ENCODE measurements at regions of chr16 and their contacts with region 1.

Region 1: DNA sequence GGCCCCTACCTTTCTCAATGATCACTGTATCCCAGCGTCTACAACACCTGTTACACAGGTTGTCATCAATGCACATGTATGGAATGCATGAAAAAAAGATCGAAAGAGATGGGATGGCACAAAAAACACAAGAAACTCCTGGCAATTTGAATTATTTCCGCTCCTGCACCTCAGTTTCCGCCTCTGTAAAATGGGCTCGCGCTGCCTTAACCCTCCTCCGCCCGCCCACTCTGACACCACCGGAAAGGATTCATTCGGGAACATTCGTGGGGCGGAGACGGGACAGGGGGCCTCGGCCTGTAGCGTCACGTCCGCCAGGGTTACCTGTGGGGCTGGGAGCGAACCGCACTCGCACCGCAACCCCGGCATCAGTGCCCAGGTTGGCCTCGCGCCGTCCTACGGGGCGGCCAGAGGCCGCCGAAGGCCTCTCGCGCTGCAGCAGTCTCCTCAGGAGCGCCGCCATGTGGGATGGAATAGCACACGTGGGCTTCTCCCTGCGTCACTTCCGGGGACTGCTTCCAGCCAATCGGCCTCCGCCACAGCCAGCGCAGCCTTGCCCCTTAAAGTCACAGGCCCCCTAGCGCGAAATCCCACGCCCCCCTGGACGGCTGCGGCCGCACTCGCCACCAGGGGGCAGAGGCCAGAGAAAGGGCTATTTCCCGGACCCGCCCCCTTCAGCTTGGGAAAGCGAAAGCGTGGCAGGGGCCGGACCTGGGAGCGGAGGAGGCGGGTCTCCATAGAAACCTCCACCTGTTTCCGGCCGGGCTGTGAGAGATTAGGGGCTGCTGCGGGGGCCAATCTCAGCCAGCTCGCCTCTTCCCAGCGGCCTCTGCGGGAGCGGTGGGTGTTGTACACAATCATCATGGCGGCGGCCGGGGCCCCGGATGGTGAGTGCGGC is at the starts of genes EARS2 and UBFD1:
- DNase-seq: peak; percentile 100
- H3K4me3 ChIP-seq: peak within 1 kb of the TSS; percentile 74 to 92 (median 86)
- H3K27ac ChIP-seq: peak within 1 kb of the TSS; percentile 74
- H3K4me1 ChIP-seq: peaks cover 12% of the 10 kb centered on the region
- H3K27me3 ChIP-seq: no peaks in the 10 kb centered on the region
- CTCF ChIP-seq: peak; percentile 98 to 100
- POLR2A ChIP-seq: peak; percentile 71
- total RNA-seq, gene EARS2: 10.9 and 14.7 TPM in 2 replicates
- total RNA-seq, gene UBFD1: 64.8 and 69.9 TPM in 2 replicates

Region 2: DNA sequence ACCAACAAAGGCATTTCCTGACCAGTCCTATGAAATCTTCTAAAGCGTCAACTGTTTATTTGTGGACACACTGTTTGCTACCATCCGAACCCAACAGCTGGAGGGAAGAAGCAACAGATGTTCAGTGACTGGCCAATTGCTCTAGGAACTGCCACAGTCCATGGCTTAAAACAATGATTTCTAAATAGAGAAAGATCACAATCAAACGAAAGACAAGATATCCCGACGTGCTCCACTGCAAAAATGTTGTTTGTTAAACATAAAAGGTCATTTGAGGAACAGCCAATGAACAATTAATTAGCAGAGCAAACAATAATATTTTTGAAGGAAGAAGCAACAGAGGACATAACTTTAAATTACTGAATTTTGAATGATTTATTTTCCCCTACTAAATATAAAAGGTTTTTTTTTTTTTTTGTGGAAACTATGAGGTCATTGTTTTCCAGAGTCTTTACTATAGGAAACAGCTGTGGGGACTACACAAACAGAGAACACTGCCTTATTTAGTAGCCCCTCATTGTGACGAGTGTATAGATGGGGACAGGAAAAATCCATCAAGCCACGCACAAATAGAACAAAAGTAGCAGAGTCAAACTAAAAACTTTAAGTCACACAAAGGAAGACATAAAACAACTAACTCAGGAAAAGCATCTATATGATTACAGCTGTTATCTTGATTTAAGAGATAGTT is 425.1 kb before region 1 on chr16:
- CTCF ChIA-PET with region 1: no interaction called
- POLR2A ChIA-PET with region 1: no interaction called
- dilution Hi-C with region 1: no loop called
- intact Hi-C with region 1: loop called (anchors 1 kb)
- DNase-seq: peak; percentile 96
- H3K4me3 ChIP-seq: peak overlapping the region in 1 of 3 experiments; percentile 43
- H3K27ac ChIP-seq: peak overlapping the region; percentile 97
- H3K4me1 ChIP-seq: peaks cover 45% of the 10 kb centered on the region
- H3K27me3 ChIP-seq: no peaks in the 10 kb centered on the region
- CTCF ChIP-seq: no peak
- POLR2A ChIP-seq: peak; percentile 31

Region 3: DNA sequence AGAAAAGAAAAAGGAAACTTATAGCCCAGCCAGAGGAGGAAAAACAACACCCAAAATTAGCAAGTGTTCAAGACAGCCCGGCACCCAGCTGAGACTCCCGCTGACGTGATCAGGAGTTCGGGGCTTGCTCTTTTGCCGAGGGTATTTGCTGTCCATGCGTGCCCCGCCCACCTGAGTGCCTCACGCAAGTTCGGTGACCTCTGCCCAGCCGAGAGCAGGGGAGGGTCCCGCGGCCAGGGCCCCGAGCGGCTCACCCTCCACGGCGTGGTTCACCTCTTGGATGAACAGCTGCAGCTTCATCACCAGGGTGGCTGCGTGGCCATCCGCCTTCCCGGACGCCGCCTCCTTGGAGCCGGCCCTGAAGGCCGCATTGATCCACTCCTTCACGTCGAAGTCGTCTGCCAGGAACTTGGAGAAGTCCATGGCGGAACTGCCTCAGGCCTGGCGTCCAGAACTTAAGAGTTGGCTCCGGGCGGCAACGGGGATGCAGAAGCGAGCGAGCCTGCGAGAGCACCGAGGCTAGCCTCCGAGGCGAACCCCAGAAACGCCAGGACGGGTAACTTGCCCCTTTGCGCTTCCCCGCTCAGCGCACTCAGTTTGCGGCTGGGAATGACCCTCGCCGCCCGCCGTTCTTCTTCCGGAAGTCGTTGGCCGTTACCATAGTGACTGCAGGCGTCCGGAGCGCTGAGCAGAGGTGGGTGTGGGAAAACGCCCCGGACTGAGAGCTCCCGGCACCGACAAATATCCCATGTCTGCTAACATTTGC is 104.4 kb before region 1 on chr16 and contains the start of gene COG7:
- CTCF ChIA-PET with region 1: no interaction called
- POLR2A ChIA-PET with region 1: no interaction called
- dilution Hi-C with region 1: no loop called
- intact Hi-C with region 1: loop called (anchors 1 kb)
- DNase-seq: peak; percentile 95
- H3K4me3 ChIP-seq: peak within 1 kb of the TSS; percentile 65 to 79 (median 70)
- H3K27ac ChIP-seq: peak within 1 kb of the TSS; percentile 37
- H3K4me1 ChIP-seq: peaks cover 3% of the 10 kb centered on the region
- H3K27me3 ChIP-seq: no peaks in the 10 kb centered on the region
- CTCF ChIP-seq: no peak
- POLR2A ChIP-seq: peak; percentile 22
- total RNA-seq, gene COG7: 20.7 and 24.1 TPM in 2 replicates

Region 4: GRCh38 chr16:23504451-23505179 is 52.5 kb before region 1 on chr16:
- CTCF ChIA-PET with region 1: interaction called, 5 read pairs
- POLR2A ChIA-PET with region 1: no interaction called
- dilution Hi-C with region 1: no loop called
- intact Hi-C with region 1: loop called (anchors 2 kb)
- DNase-seq: peak; percentile 87
- H3K4me3 ChIP-seq: no peak overlapping the region
- H3K27ac ChIP-seq: peak overlapping the region; percentile 64
- H3K4me1 ChIP-seq: peaks cover 20% of the 10 kb centered on the region
- H3K27me3 ChIP-seq: no peaks in the 10 kb centered on the region
- CTCF ChIP-seq: no peak
- POLR2A ChIP-seq: no peak

Region 5: GRCh38 chr16:23595951-23596720 is 39.0 kb after region 1 on chr16 and contains the start of gene NDUFAB1:
- CTCF ChIA-PET with region 1: interaction called, 11 read pairs
- POLR2A ChIA-PET with region 1: no interaction called
- dilution Hi-C with region 1: no loop called
- intact Hi-C with region 1: loop called (anchors 1 kb)
- DNase-seq: peak; percentile 90
- H3K4me3 ChIP-seq: peak within 1 kb of the TSS; percentile 77 to 89 (median 87)
- H3K27ac ChIP-seq: peak within 1 kb of the TSS; percentile 59
- H3K4me1 ChIP-seq: peaks cover 7% of the 10 kb centered on the region
- H3K27me3 ChIP-seq: no peaks in the 10 kb centered on the region
- CTCF ChIP-seq: peak; percentile 91 to 99
- POLR2A ChIP-seq: peak; percentile 83
- total RNA-seq, gene NDUFAB1: 109 and 112 TPM in 2 replicates

Region 6: GRCh38 chr16:23640931-23641765 is 84.0 kb after region 1 on chr16 and contains the starts of genes DCTN5 and PALB2:
- CTCF ChIA-PET with region 1: interaction called, 5 read pairs
- POLR2A ChIA-PET with region 1: no interaction called
- dilution Hi-C with region 1: no loop called
- intact Hi-C with region 1: loop called (anchors 1 kb)
- DNase-seq: peak; percentile 94
- H3K4me3 ChIP-seq: peak within 1 kb of the TSS; percentile 68 to 99 (median 99)
- H3K27ac ChIP-seq: peak within 1 kb of the TSS; percentile 96
- H3K4me1 ChIP-seq: peaks cover 15% of the 10 kb centered on the region
- H3K27me3 ChIP-seq: no peaks in the 10 kb centered on the region
- CTCF ChIP-seq: no peak
- POLR2A ChIP-seq: peak; percentile 93
- total RNA-seq, gene DCTN5: 80.8 and 83.5 TPM in 2 replicates
- total RNA-seq, gene PALB2: 11.8 and 15.6 TPM in 2 replicates

Region 7: GRCh38 chr16:23663918-23664317 is 106.8 kb after region 1 on chr16:
- CTCF ChIA-PET with region 1: no interaction called
- POLR2A ChIA-PET with region 1: no interaction called
- dilution Hi-C with region 1: no loop called
- intact Hi-C with region 1: no loop called
- DNase-seq: no peak
- H3K4me3 ChIP-seq: no peak overlapping the region
- H3K27ac ChIP-seq: no peak overlapping the region
- H3K4me1 ChIP-seq: peaks cover 5% of the 10 kb centered on the region
- H3K27me3 ChIP-seq: no peaks in the 10 kb centered on the region
- CTCF ChIP-seq: no peak
- POLR2A ChIP-seq: no peak

Region 8: DNA sequence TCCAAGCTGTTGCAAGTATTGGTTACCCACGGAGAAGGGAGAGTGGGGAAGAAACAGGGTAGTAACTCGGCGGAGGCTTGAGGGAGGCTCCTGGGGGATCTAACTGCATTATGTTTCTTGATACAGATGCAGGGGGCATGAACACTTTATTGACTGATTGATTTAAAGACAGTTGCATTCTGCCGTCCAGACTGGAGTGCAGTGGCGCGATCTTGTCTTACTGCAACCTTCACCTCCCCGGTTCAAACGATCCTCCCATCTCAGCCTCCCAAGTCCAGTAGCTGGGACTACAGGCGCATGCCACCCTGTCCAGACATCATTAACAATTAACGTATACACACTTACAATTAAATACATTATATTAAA is 171.0 kb after region 1 on chr16:
- CTCF ChIA-PET with region 1: interaction called, 6 read pairs
- POLR2A ChIA-PET with region 1: no interaction called
- dilution Hi-C with region 1: no loop called
- intact Hi-C with region 1: loop called (anchors 1 kb)
- DNase-seq: no peak
- H3K4me3 ChIP-seq: no peak overlapping the region
- H3K27ac ChIP-seq: no peak overlapping the region
- H3K4me1 ChIP-seq: no peaks in the 10 kb centered on the region
- H3K27me3 ChIP-seq: no peaks in the 10 kb centered on the region
- CTCF ChIP-seq: no peak
- POLR2A ChIP-seq: no peak